AG04450 (cell line): ENCODE measurements at regions of chr17 and their contacts with region 1.

Region 1: GRCh38 chr17:37373530-37374159 is 2.1 kb upstream of the C17orf78 start:
- DNase-seq: peak; percentile 68
- H3K4me3 ChIP-seq: no peak overlapping the region
- H3K27ac ChIP-seq: no peak overlapping the region
- H3K27me3 ChIP-seq: no peaks in the 10 kb centered on the region
- CTCF ChIP-seq: peak; percentile 100

Region 2: GRCh38 chr17:36601303-36602029 is 772.2 kb before region 1 on chr17 and contains the start of gene MRM1:
- CTCF ChIA-PET with region 1: interaction called, 42 read pairs
- POLR2A ChIA-PET with region 1: no interaction called
- DNase-seq: peak; percentile 76
- H3K4me3 ChIP-seq: peak within 1 kb of the TSS; percentile 95
- H3K27ac ChIP-seq: peak within 1 kb of the TSS; percentile 75
- H3K27me3 ChIP-seq: no peaks in the 10 kb centered on the region
- CTCF ChIP-seq: peak; percentile 16; the same call in 1 of the 2 replicates
- polyA plus RNA-seq, gene MRM1: 2.0 and 2.4 TPM in 2 replicates

Region 3: GRCh38 chr17:37158290-37158689 is 215.4 kb before region 1 on chr17:
- CTCF ChIA-PET with region 1: no interaction called
- POLR2A ChIA-PET with region 1: no interaction called
- DNase-seq: no peak
- H3K4me3 ChIP-seq: no peak overlapping the region
- H3K27ac ChIP-seq: no peak overlapping the region
- H3K27me3 ChIP-seq: no peaks in the 10 kb centered on the region
- CTCF ChIP-seq: no peak

Region 4: DNA sequence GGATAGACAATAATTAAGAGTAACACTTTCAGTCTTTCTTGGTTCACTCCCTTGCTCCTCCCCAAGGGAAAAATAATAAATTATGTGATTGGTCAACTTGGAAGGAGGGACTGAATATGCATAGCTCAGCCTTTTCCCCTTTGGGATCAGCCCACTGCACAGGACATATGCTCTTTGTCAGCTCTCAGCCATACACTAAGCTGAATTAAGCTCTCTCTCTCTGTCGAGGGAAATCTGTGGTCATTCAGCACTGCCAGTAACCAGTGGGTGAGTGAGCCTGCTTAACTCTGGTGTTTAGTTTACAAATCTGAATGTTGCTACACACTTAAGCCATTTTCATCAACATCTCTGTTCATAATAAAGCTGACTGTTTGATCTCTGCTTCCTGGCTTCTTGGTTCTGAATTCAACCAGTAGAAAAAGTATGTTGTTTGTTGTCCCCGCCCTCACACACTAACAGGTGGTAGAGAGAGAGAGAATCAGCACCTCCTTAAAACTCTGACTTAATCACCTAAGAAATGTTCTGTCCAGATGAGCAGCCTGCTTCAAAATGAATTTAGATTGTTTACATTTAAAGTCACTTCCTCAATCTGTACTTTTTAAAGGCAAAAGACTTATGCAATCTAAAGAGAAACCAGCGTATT is 100.1 kb before region 1 on chr17:
- CTCF ChIA-PET with region 1: interaction called, 13 read pairs
- POLR2A ChIA-PET with region 1: no interaction called
- DNase-seq: peak; percentile 80
- H3K4me3 ChIP-seq: no peak overlapping the region; the same call in 1 of the 2 replicates
- H3K27ac ChIP-seq: peak overlapping the region; percentile 66
- H3K27me3 ChIP-seq: no peaks in the 10 kb centered on the region
- CTCF ChIP-seq: no peak

Region 5: GRCh38 chr17:37292429-37293139 is 81.1 kb before region 1 on chr17:
- CTCF ChIA-PET with region 1: no interaction called
- POLR2A ChIA-PET with region 1: no interaction called
- DNase-seq: no peak
- H3K4me3 ChIP-seq: no peak overlapping the region
- H3K27ac ChIP-seq: no peak overlapping the region
- H3K27me3 ChIP-seq: no peaks in the 10 kb centered on the region
- CTCF ChIP-seq: no peak

Region 6: GRCh38 chr17:37322826-37323561 is 50.7 kb before region 1 on chr17:
- CTCF ChIA-PET with region 1: interaction called, 12 read pairs
- POLR2A ChIA-PET with region 1: no interaction called
- DNase-seq: no peak
- H3K4me3 ChIP-seq: no peak overlapping the region
- H3K27ac ChIP-seq: no peak overlapping the region
- H3K27me3 ChIP-seq: no peaks in the 10 kb centered on the region
- CTCF ChIP-seq: no peak

Region 7: GRCh38 chr17:37358830-37359681 is 14.6 kb before region 1 on chr17:
- CTCF ChIA-PET with region 1: interaction called, 51 read pairs
- POLR2A ChIA-PET with region 1: interaction called, 3 read pairs
- DNase-seq: peak; percentile 64
- H3K4me3 ChIP-seq: peak overlapping the region; percentile 78
- H3K27ac ChIP-seq: peak overlapping the region; percentile 61
- H3K27me3 ChIP-seq: no peaks in the 10 kb centered on the region
- CTCF ChIP-seq: peak; percentile 22; the same call in 1 of the 2 replicates

Region 8: GRCh38 chr17:37392024-37392590 is 18.5 kb after region 1 on chr17:
- CTCF ChIA-PET with region 1: interaction called, 38 read pairs
- POLR2A ChIA-PET with region 1: interaction called, 3 read pairs
- DNase-seq: peak; percentile 47
- H3K4me3 ChIP-seq: peak overlapping the region; percentile 11; the same call in 1 of the 2 replicates
- H3K27ac ChIP-seq: peak overlapping the region; percentile 55
- H3K27me3 ChIP-seq: no peaks in the 10 kb centered on the region
- CTCF ChIP-seq: no peak

Region 9: DNA sequence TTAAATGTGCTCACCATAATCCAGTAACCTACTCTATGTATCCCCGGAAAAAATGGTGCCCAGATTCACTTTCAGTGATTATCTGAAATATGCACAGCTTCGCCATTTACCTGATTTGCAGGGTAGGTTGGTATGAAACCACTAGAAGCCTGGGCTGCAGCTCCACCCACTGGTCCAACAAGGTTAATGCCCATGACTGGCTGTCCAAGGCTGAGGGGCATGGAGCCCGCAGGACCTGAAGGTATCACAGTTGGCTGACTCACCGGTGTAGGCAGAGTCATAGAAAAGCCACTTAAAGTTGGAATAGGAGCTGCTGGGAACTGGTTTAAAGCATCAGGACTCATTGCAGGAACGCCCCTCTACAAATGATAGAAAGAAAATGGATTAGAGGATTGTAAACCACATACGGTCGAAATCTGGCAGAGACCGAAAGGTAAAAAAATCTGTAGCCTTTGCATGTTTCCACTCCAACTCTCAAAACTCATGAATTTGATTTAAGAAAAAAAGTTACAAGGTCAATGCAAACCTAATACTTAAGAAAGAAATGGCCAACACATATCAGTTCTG is 197.0 kb after region 1 on chr17:
- CTCF ChIA-PET with region 1: interaction called, 24 read pairs
- POLR2A ChIA-PET with region 1: no interaction called
- DNase-seq: peak; percentile 4
- H3K4me3 ChIP-seq: no peak overlapping the region
- H3K27ac ChIP-seq: no peak overlapping the region
- H3K27me3 ChIP-seq: no peaks in the 10 kb centered on the region
- CTCF ChIP-seq: peak; percentile 51